ENCODE measurements at regions of chr10 and their contacts with region 1.

Region 1: DNA sequence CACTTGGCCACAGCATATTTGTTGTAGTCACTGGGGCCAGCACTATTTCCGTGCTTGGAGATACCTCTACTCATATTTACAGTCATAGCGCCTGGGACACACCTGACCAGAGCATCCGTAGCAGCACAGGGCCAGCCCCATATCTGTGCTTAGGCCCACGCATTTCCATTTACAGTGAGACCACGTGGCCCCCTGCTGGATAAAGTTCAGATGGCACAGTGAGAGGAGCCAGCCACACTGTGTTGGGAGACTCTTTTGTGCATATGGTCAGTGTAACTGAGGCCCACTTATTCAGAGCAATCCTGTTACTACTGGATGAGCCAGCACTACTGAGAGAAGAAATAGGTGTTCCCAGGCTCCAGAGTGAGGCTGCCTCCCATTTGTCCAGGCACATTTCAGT is 455.3 kb downstream of the REEP3 start:
- DNase-seq: peak in 5 of 7 donors; percentile 23 to 70 (median 48)
- H3K4me3 ChIP-seq: no peak overlapping the region
- H3K27ac ChIP-seq: no peak overlapping the region
- H3K4me1 ChIP-seq: no peaks in the 10 kb centered on the region
- H3K27me3 ChIP-seq: no peaks in the 10 kb centered on the region
- CTCF ChIP-seq: peak; percentile 13 to 57 (median 42)
- POLR2A ChIP-seq: no peak

Region 2: GRCh38 chr10:63866075-63866746 is 110.3 kb before region 1 on chr10:
- intact Hi-C with region 1: loop called (anchors 5 kb)
- DNase-seq: peak; percentile 23 to 57 (median 35)
- H3K4me3 ChIP-seq: peak overlapping the region in 1 of 4 donors; percentile 9
- H3K27ac ChIP-seq: no peak overlapping the region
- H3K4me1 ChIP-seq: peaks cover 0 to 7% of the 10 kb centered on the region in 2 donors
- H3K27me3 ChIP-seq: peaks cover 16% of the 10 kb centered on the region
- CTCF ChIP-seq: peak; percentile 50 to 82 (median 58)
- POLR2A ChIP-seq: no peak

Measured in adrenal gland (tissue), 19 donors.